ENCODE measurements at regions of chr1 and their contacts with region 1.

Region 1: GRCh38 chr1:171758011-171758410 is 16.1 kb upstream of the VAMP4 start:
- DNase-seq: no peak
- ATAC-seq: no peak
- H3K4me3 ChIP-seq: no peak overlapping the region
- H3K4me3 Mint-ChIP-seq: no peak overlapping the region
- H3K27ac ChIP-seq: no peak overlapping the region
- H3K27ac Mint-ChIP-seq: no peak overlapping the region
- H3K4me1 ChIP-seq: no peaks in the 10 kb centered on the region
- H3K4me1 Mint-ChIP-seq: peaks cover 0 to 7% (median 0%) of the 10 kb centered on the region in 7 donors
- H3K27me3 ChIP-seq: no peaks in the 10 kb centered on the region
- H3K27me3 Mint-ChIP-seq: peaks cover 5 to 18% (median 8%) of the 10 kb centered on the region in 5 donors

Region 2: DNA sequence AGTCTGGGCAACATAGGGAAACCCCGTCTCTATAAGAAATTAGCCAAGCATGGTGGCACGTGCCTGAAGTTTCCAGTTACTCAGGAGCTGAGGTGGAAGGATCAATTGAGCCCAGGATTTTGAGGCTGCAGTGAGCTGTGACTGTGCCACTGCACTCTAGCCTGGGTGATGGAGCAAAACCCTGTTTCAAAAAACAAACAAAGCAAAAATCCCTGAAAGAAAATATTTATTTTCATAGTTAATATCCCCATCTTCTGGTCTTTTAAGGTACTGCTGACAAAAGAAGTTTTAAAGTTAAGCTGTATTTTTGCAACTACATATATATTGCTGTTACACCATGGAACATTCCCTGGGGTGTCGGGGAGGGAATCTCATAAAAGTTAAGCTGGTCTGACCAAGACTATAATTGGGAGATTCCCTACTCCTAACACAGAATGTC is 42.2 kb before region 1 on chr1:
- CTCF ChIA-PET with region 1: no interaction called
- POLR2A ChIA-PET with region 1: no interaction called
- intact Hi-C with region 1: no loop called
- DNase-seq: no peak
- ATAC-seq: no peak
- H3K4me3 ChIP-seq: no peak overlapping the region
- H3K4me3 Mint-ChIP-seq: no peak overlapping the region
- H3K27ac ChIP-seq: no peak overlapping the region
- H3K27ac Mint-ChIP-seq: no peak overlapping the region
- H3K4me1 ChIP-seq: no peaks in the 10 kb centered on the region
- H3K4me1 Mint-ChIP-seq: peaks cover 7 to 21% (median 11%) of the 10 kb centered on the region in 7 donors
- H3K27me3 ChIP-seq: no peaks in the 10 kb centered on the region
- H3K27me3 Mint-ChIP-seq: no peaks in the 10 kb centered on the region

Region 3: DNA sequence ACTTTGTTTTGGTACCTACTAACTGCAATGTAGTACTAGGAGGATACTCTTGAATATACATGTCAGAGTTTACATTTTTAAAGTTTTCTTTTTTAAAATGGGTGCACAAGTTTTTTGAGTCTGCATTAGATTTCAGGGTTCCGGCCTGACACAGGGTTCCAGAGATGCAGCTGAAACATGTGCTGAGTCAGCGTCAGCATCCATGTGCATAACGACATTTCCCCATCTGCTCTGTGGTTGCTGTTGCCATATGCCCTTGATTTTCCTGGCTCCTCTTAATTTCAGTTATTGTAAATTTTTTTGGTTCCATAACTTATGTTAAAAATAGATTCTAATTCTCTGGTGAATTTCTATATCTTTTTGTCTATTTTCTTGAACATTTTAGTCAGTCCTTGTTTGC is 11.2 kb after region 1 on chr1:
- CTCF ChIA-PET with region 1: no interaction called
- POLR2A ChIA-PET with region 1: no interaction called
- intact Hi-C with region 1: loop called in 1 of 2 experiments (anchors 1 kb)
- DNase-seq: no peak
- ATAC-seq: no peak
- H3K4me3 ChIP-seq: no peak overlapping the region
- H3K4me3 Mint-ChIP-seq: no peak overlapping the region
- H3K27ac ChIP-seq: no peak overlapping the region
- H3K27ac Mint-ChIP-seq: no peak overlapping the region
- H3K4me1 ChIP-seq: no peaks in the 10 kb centered on the region
- H3K4me1 Mint-ChIP-seq: peaks cover 0 to 2% (median 0%) of the 10 kb centered on the region in 7 donors
- H3K27me3 ChIP-seq: no peaks in the 10 kb centered on the region
- H3K27me3 Mint-ChIP-seq: peaks cover 9 to 30% (median 24%) of the 10 kb centered on the region in 5 donors